Motor neuron (in vitro differentiated cells): ENCODE measurements at regions of chr1 and their contacts with region 1.

Region 1: DNA sequence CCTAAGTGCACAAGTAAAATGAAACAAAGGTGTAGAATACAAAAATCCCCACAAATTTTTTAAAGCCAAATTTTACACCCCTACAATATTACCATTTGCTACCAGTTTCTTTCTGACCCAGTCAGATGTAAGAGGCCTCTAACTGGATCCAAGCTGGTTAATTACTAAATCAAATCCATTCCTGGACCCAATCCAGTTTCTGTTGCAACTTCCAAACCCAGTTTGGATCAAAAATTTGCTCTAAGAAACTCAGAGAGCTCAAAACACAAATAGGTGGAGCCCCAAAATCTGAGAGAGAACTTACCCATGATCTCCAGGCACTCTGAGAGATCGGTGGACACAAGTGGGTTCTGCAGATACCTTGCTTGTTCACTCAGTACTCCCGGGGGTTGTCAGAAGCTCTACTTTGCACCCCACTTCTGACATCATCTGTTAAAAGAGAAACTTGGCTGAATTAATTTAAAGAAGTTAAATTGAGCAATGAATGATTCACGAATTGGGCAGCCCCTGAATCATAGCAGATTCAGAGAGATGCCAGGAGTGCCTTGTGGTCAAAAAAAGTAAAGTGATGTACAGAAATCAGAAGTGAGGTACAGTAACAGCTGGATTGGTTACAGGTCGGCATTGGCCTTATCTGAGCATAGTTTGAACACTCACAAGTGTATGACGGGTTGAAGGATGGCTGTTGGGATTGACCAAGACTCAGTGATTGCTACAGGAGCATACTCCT is 448.0 kb downstream of the KCNT2 start:
- ATAC-seq: no peak
- H3K4me3 ChIP-seq: no peak overlapping the region
- H3K27ac ChIP-seq: no peak overlapping the region
- H3K4me1 ChIP-seq: no peaks in the 10 kb centered on the region

Region 2: DNA sequence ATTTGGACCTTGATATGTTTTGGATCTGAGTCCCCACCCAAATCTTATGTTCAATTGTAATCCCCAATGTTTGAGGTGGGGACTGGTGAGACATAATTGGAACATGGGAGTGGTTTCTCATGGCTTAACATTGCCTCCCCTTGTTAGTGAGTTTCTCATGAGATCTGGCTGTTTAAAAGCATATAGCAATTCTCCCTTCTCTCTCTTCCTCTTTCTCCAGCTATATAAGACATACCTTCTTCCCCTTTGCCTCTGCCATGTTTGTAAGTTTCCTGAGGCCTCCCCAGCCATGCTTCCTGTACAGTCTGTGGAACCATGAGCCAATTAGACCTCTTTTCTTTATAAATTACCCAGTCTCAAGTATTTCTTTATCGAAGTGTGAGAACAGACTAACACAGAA is 244.4 kb before region 1 on chr1:
- in situ Hi-C with region 1: no loop called
- ATAC-seq: no peak
- H3K4me3 ChIP-seq: no peak overlapping the region
- H3K27ac ChIP-seq: no peak overlapping the region
- H3K4me1 ChIP-seq: no peaks in the 10 kb centered on the region

Region 3: DNA sequence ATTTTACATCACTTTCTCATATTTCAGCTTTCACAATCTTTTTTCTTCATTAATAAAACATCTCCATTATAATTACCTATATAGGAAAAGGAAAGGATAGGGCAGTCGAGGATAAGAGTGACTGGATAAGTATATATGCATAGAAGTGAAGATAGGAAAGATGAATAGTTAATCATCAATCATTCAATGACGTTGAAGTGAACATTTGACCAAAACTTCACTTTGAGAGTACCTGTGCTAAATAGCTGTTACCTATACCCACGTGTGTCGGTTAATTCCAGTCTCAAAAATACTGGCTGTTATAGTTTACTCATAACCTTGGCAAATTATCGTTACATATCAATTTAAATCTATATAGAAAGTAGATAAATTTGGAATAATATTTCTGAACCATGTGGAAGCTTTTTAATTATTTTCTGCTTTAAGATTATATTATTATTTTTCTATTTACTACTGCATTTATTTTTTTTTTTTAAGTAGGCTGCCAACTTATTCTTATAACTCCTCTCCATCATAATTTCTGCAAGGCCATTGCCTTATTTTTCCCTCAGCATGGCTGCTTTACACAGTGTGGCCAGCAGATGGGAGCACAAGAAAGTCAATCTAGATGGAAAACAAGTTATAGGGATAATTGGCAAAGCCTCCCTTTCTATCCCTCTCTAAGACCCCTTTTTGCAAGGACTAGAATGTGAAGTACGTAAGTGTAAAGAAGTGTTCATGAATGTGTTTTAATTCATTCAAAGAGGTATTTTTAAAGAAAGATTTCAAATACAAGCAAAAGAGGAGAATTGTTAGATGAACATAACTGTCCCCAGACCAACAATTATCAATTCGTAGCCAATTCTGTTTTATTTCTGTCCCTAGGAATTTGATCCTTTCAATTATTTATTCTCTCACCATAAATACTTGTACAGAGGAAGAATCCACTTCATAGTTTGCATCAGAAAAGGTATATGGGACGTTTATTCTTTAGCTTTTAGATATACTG is 157.6 kb after region 1 on chr1:
- in situ Hi-C with region 1: loop called in 2 of 9 experiments (anchors 25 kb)
- ATAC-seq: peak in 2 of 8 experiments; percentile 39 to 52
- H3K4me3 ChIP-seq: no peak overlapping the region
- H3K27ac ChIP-seq: no peak overlapping the region
- H3K4me1 ChIP-seq: no peaks in the 10 kb centered on the region

Region 4: GRCh38 chr1:196393742-196394141 is 233.5 kb after region 1 on chr1:
- in situ Hi-C with region 1: no loop called
- ATAC-seq: peak in 2 of 8 experiments; percentile 18 to 57
- H3K4me3 ChIP-seq: no peak overlapping the region
- H3K27ac ChIP-seq: no peak overlapping the region
- H3K4me1 ChIP-seq: no peaks in the 10 kb centered on the region